Naive thymus-derived CD4-positive, alpha-beta T cell (primary cell): ENCODE measurements at regions of chr9 and their contacts with region 1.

Region 1: GRCh38 chr9:136944519-136945279 is at the starts of genes C8G and FBXW5:
- DNase-seq: peak; percentile 88 to 99 (median 96)
- ATAC-seq: peak; percentile 92
- H3K4me3 ChIP-seq: peak within 1 kb of the TSS; percentile 72
- H3K4me3 Mint-ChIP-seq: peak within 1 kb of the TSS; percentile 71 to 85 (median 81)
- H3K27ac ChIP-seq: peak within 1 kb of the TSS; percentile 77
- H3K27ac Mint-ChIP-seq: peak within 1 kb of the TSS in 8 of 9 donors; percentile 63 to 90 (median 79)
- H3K4me1 ChIP-seq: peaks cover 10 to 11% of the 10 kb centered on the region in 2 donors
- H3K4me1 Mint-ChIP-seq: peaks cover 0 to 14% (median 5%) of the 10 kb centered on the region in 7 donors
- H3K27me3 ChIP-seq: no peaks in the 10 kb centered on the region
- H3K27me3 Mint-ChIP-seq: no peaks in the 10 kb centered on the region
- total RNA-seq, gene C8G: 0.77 to 3.6 (median 1.4) TPM
- total RNA-seq, gene FBXW5: 54.3 to 105 (median 94.5) TPM

Region 2: DNA sequence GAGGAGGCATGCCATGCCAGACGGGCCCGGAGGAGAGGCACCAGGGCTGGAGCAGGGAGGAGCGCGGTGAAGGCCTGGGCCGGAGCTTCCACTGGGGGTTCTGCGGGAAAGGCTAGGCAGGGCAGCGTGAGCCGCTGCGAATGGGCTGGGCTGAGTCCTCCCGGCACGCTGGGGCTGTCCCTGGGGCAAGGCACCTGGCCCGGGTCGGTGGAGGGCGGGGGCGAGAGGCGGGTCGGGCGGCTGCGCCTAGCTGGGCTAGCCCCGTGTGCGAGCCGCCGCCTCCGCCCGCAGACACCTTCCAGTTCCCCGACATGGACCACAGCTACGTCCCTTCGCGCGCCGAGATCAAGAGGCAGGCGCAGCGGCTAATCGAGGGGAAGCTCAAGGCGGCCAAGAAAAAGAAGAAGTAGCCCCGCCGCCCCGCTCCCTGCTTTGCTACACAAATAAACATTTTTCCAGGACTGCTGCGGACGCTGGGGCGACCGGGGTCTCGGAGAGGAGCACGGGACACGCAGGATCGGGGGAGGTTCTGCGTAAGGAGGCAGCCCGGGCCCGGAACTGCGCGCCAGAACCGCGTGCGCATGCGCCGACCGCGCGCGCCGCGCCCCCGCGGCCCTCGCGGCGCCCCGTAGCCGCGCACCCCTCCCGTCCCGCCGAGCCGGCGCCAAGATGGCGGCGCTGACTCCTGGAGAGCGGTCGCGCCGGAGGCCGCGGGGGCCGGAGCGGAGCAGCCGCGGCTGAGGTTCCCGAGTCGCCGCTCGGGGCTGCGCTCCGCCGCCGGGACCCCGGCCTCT is 137.2 kb before region 1 on chr9 and contains the start of gene RABL6:
- CTCF ChIA-PET with region 1: no interaction called
- POLR2A ChIA-PET with region 1: interaction called, 4 read pairs
- intact Hi-C with region 1: loop called (anchors 1 to 5 kb)
- DNase-seq: peak; percentile 70 to 92 (median 86)
- ATAC-seq: peak; percentile 95
- H3K4me3 ChIP-seq: peak within 1 kb of the TSS; percentile 69
- H3K4me3 Mint-ChIP-seq: peak within 1 kb of the TSS; percentile 78 to 92 (median 90)
- H3K27ac ChIP-seq: peak within 1 kb of the TSS; percentile 94
- H3K27ac Mint-ChIP-seq: peak within 1 kb of the TSS; percentile 76 to 95 (median 90)
- H3K4me1 ChIP-seq: peaks cover 20 to 32% of the 10 kb centered on the region in 2 donors
- H3K4me1 Mint-ChIP-seq: peaks cover 22 to 52% (median 33%) of the 10 kb centered on the region in 7 donors
- H3K27me3 ChIP-seq: no peaks in the 10 kb centered on the region
- H3K27me3 Mint-ChIP-seq: peaks cover 0 to under 1% (median 0%) of the 10 kb centered on the region in 5 donors
- total RNA-seq, gene RABL6: 59.6 to 100 (median 60.9) TPM

Region 3: DNA sequence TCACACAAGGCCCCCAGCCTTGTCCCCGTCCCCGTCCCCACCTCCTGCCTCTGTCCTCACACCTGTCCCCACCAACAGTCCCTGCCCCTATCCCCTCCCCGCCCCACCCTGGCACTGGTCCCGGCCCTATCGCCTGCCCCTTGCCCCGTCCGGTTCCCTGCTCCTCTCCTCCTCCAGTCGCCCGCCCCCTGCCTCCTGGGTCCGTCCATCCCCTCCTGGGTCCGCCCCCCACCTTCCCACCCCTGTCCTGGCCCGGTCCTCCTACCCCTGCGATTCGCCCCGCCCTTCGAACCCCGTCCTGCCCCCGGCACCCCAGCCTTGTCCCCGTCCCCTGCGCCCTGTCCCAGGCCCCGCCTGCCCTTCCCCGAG is 79.0 kb before region 1 on chr9:
- CTCF ChIA-PET with region 1: no interaction called
- POLR2A ChIA-PET with region 1: no interaction called
- intact Hi-C with region 1: loop called (anchors 1 kb)
- DNase-seq: no peak
- ATAC-seq: no peak
- H3K4me3 ChIP-seq: peak overlapping the region; percentile 68
- H3K4me3 Mint-ChIP-seq: peak overlapping the region; percentile 55 to 94 (median 87)
- H3K27ac ChIP-seq: peak overlapping the region; percentile 99
- H3K27ac Mint-ChIP-seq: peak overlapping the region; percentile 36 to 94 (median 87)
- H3K4me1 ChIP-seq: peaks cover 7 to 8% of the 10 kb centered on the region in 2 donors
- H3K4me1 Mint-ChIP-seq: peaks cover 4 to 24% (median 19%) of the 10 kb centered on the region in 7 donors
- H3K27me3 ChIP-seq: no peaks in the 10 kb centered on the region
- H3K27me3 Mint-ChIP-seq: no peaks in the 10 kb centered on the region

Region 4: DNA sequence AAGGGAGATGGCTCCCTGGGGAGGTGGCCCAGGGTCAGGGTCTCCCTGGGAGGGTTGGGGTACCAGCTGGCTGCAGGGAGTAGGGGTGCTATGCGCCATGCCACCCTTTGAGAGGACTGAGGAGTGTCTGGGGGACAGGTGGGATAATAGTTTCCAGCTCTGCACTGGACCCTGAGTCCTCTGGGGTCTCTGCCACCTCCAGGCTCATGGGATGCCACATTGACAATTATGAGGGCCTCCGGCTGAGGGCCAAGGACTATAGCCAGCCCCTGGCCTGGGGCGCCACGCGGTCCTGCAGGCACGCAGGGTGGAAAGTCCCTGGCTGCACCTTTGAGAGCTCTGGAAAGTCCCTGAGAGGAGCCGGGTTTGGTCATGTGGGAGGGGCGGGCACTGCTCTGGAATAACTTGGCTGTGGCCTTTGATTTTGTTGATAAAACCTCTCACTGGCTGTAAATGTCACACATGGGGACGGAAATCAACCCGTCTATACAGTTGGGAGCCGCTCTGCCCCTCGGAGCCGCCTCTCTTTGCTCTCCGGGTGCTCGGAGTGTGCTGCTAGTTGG is 42.4 kb before region 1 on chr9:
- CTCF ChIA-PET with region 1: no interaction called
- POLR2A ChIA-PET with region 1: no interaction called
- intact Hi-C with region 1: loop called in 1 of 2 experiments (anchors 1 kb)
- DNase-seq: peak; percentile 38 to 91 (median 66)
- ATAC-seq: peak; percentile 93
- H3K4me3 ChIP-seq: peak overlapping the region; percentile 24
- H3K4me3 Mint-ChIP-seq: peak overlapping the region; percentile 62 to 81 (median 75)
- H3K27ac ChIP-seq: peak overlapping the region; percentile 76
- H3K27ac Mint-ChIP-seq: peak overlapping the region; percentile 89 to 98 (median 94)
- H3K4me1 ChIP-seq: peaks cover 26 to 30% of the 10 kb centered on the region in 2 donors
- H3K4me1 Mint-ChIP-seq: peaks cover 12 to 59% (median 36%) of the 10 kb centered on the region in 7 donors
- H3K27me3 ChIP-seq: no peaks in the 10 kb centered on the region
- H3K27me3 Mint-ChIP-seq: no peaks in the 10 kb centered on the region

Region 5: GRCh38 chr9:137086531-137087408 is 142.1 kb after region 1 on chr9 and contains the start of gene MAN1B1:
- CTCF ChIA-PET with region 1: no interaction called
- POLR2A ChIA-PET with region 1: no interaction called
- intact Hi-C with region 1: loop called in 1 of 2 experiments (anchors 1 kb)
- DNase-seq: peak; percentile 96 to 100 (median 99)
- ATAC-seq: peak; percentile 92
- H3K4me3 ChIP-seq: peak within 1 kb of the TSS; percentile 73
- H3K4me3 Mint-ChIP-seq: peak within 1 kb of the TSS; percentile 88 to 96 (median 92)
- H3K27ac ChIP-seq: peak within 1 kb of the TSS; percentile 92
- H3K27ac Mint-ChIP-seq: peak within 1 kb of the TSS; percentile 92 to 98 (median 95)
- H3K4me1 ChIP-seq: peaks cover 18% of the 10 kb centered on the region in 2 donors
- H3K4me1 Mint-ChIP-seq: peaks cover 25 to 34% (median 30%) of the 10 kb centered on the region in 7 donors
- H3K27me3 ChIP-seq: no peaks in the 10 kb centered on the region
- H3K27me3 Mint-ChIP-seq: no peaks in the 10 kb centered on the region
- total RNA-seq, gene MAN1B1: 57.3 to 74.2 (median 70.2) TPM

Region 6: GRCh38 chr9:137254624-137255447 is 310.1 kb after region 1 on chr9 and contains the start of gene NELFB:
- CTCF ChIA-PET with region 1: no interaction called
- POLR2A ChIA-PET with region 1: no interaction called
- intact Hi-C with region 1: loop called in 1 of 2 experiments (anchors 1 kb)
- DNase-seq: peak; percentile 89 to 100 (median 95)
- ATAC-seq: peak; percentile 97
- H3K4me3 ChIP-seq: peak within 1 kb of the TSS; percentile 91
- H3K4me3 Mint-ChIP-seq: peak within 1 kb of the TSS; percentile 79 to 94 (median 88)
- H3K27ac ChIP-seq: peak within 1 kb of the TSS; percentile 70
- H3K27ac Mint-ChIP-seq: peak within 1 kb of the TSS in 7 of 9 donors; percentile 65 to 91 (median 82)
- H3K4me1 ChIP-seq: peaks cover 11% of the 10 kb centered on the region in 2 donors
- H3K4me1 Mint-ChIP-seq: peaks cover 0 to 22% (median 17%) of the 10 kb centered on the region in 7 donors
- H3K27me3 ChIP-seq: no peaks in the 10 kb centered on the region
- H3K27me3 Mint-ChIP-seq: no peaks in the 10 kb centered on the region
- total RNA-seq, gene NELFB: 33.4 to 64.2 (median 38.9) TPM

Region 7: DNA sequence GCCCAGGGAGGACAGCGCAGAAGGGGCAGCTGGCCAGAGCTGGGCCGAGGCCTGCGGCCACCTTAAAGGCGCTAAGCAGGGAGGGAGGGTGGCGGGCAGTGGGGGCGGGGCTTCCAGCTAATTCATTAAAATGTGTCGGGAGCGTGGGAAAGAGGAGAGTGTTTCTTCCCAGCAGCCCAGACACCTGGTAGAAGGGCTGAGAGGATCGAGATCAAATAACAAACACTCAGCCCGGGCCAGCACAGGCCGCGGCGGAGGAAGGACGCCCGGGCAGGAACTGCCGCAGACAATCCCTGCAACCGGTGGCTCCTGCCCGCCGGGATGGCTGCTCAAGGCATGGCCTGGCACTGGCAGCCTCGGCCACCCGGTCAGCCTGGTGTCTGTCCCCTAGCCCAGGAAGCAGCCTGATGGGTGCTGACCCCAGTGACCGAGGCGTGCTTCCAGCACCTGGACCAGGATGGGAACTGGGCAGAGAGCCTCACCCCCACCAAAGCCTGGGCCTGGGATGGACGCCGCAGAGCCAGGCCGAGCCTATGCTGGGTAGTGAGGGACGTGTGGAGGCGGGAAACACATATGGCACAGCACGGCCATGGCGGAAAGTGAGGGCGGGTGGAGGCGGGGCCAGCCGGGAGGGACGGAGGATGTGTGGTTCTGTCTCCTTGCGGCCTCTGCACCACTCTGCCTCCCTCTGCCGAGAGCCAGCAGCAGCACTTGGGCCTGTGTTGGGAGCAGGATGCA is 360.5 kb after region 1 on chr9:
- CTCF ChIA-PET with region 1: no interaction called
- POLR2A ChIA-PET with region 1: no interaction called
- intact Hi-C with region 1: no loop called
- DNase-seq: peak in 6 of 9 donors; percentile 28 to 66 (median 41)
- ATAC-seq: peak; percentile 40
- H3K4me3 ChIP-seq: peak overlapping the region; percentile 35
- H3K4me3 Mint-ChIP-seq: peak overlapping the region in 8 of 10 donors; percentile 46 to 69 (median 50)
- H3K27ac ChIP-seq: no peak overlapping the region
- H3K27ac Mint-ChIP-seq: peak overlapping the region in 1 of 9 donors; percentile 78
- H3K4me1 ChIP-seq: peaks cover 7 to 27% of the 10 kb centered on the region in 2 donors
- H3K4me1 Mint-ChIP-seq: peaks cover 0 to 11% (median 8%) of the 10 kb centered on the region in 7 donors
- H3K27me3 ChIP-seq: peaks cover 0 to 4% of the 10 kb centered on the region in 2 donors
- H3K27me3 Mint-ChIP-seq: peaks cover 0 to 8% (median 0%) of the 10 kb centered on the region in 5 donors